MCF 10A (cell line): ENCODE measurements at regions of chr20 and their contacts with region 1.

Region 1: DNA sequence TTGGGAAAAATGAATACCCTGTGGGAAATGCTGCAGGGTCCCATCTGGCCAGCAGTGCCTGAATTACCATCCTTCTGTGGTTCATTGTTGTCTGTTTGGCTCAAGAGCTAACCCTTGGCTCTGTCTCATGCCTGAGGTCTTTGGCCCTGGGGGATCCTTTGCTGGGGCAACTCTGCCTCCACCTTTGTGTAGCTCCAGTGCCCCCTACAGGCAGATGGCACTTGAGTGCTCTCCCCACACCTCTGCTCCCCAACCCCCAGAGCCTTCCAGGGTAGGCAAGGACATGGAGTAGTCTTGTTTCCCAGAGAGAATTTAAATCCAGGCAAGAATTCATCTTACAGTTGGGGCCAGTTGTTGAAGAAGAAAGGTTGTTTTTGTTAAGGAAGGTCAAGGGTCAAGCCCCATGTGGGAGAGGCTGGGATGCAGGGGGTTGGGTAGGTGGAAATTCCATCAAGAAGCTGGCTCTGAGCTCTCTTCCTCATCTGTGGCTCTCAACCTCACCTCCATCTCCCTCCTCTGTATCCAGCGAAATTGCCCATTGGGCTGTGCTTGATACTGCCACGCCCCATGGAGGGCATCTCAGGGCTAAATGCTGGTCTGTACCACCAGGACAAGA is 44.2 kb downstream of the ZNF831 start:
- DNase-seq: peak; percentile 59
- H3K4me3 Mint-ChIP-seq: no peak overlapping the region
- H3K27ac Mint-ChIP-seq: no peak overlapping the region
- H3K4me1 Mint-ChIP-seq: no peaks in the 10 kb centered on the region
- H3K27me3 Mint-ChIP-seq: peaks cover 96% of the 10 kb centered on the region
- CTCF ChIP-seq: peak; percentile 52

Region 2: DNA sequence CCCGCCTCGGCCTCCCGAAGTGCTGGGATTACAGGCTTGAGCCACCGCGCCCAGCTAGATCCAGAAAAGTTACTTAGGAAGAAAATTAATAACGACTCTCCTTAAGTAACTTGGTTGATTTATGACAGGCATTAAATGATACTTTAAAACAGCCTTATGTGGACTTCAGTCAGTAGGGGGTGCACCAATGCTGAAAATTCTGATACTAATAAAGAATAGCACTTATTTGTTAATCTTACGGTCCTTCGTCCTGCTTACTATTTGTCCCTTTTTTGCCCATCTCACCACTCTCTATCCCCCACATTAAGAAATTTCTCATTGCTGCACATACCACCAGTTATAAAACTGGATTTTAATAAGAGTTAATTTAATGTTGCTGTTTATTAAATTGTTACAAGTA is 152.6 kb before region 1 on chr20:
- CTCF ChIA-PET with region 1: interaction called, 3 read pairs
- POLR2A ChIA-PET with region 1: no interaction called
- intact Hi-C with region 1: loop called (anchors 5 kb)
- DNase-seq: peak; percentile 39
- H3K4me3 Mint-ChIP-seq: no peak overlapping the region
- H3K27ac Mint-ChIP-seq: no peak overlapping the region
- H3K4me1 Mint-ChIP-seq: no peaks in the 10 kb centered on the region
- H3K27me3 Mint-ChIP-seq: peaks cover 32% of the 10 kb centered on the region
- CTCF ChIP-seq: peak; percentile 53

Region 3: GRCh38 chr20:59141787-59142581 is 65.9 kb before region 1 on chr20:
- CTCF ChIA-PET with region 1: no interaction called
- POLR2A ChIA-PET with region 1: no interaction called
- intact Hi-C with region 1: no loop called
- DNase-seq: peak; percentile 38
- H3K4me3 Mint-ChIP-seq: no peak overlapping the region
- H3K27ac Mint-ChIP-seq: no peak overlapping the region
- H3K4me1 Mint-ChIP-seq: no peaks in the 10 kb centered on the region
- H3K27me3 Mint-ChIP-seq: peaks cover 53% of the 10 kb centered on the region
- CTCF ChIP-seq: no peak

Region 4: GRCh38 chr20:59191756-59192532 is 15.9 kb before region 1 on chr20:
- CTCF ChIA-PET with region 1: interaction called, 13 read pairs
- POLR2A ChIA-PET with region 1: no interaction called
- intact Hi-C with region 1: no loop called
- DNase-seq: no peak
- H3K4me3 Mint-ChIP-seq: no peak overlapping the region
- H3K27ac Mint-ChIP-seq: no peak overlapping the region
- H3K4me1 Mint-ChIP-seq: no peaks in the 10 kb centered on the region
- H3K27me3 Mint-ChIP-seq: peaks cover 22% of the 10 kb centered on the region
- CTCF ChIP-seq: no peak